ENCODE measurements at regions of chr1 and their contacts with region 1.

Region 1: DNA sequence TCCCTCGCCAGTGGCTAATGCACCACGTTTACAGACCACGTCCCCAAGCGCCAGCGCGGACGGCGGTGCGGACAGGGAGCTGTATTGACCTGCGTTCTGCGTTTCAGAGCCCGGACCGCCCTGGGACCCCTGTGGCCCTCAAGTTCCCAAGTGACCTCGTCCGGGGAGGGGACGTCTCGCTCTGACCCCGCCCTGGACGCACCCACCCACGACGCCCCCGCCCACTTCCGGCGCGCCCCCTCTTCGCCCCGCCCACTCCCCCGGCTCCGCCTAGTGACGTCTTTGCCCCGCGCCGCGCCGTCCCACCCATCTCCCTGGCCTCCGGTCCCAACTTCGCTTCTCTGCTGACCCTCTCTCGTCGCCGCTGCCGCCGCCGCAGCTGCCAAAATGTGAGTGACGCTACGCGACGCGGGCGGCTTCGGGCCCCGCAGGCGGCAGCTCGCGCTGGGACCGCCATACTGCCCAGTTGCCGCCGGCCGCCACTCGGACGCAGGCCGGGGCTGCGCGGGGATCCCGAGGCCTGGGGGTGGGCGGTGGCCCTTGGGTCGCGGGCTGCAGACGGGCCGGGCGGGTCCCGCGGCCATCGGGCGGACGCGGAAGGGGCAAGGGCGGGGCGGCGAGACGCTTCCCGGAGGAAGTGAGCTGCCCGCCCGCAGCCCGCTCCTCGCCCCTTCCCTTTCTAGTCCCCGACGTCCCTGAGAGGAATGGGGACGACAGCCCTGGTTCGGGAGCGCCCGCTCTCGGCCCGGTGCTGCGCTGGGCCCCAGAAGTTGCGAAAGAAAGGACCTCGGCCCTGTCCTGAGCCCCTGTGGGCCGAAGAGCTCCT is at the start of gene VAMP3:
- DNase-seq: peak; percentile 58 to 92 (median 77)
- ATAC-seq: peak; percentile 98
- H3K4me3 ChIP-seq: peak within 1 kb of the TSS; percentile 83
- H3K4me3 Mint-ChIP-seq: peak within 1 kb of the TSS; percentile 82 to 93 (median 89)
- H3K27ac ChIP-seq: peak within 1 kb of the TSS; percentile 90
- H3K27ac Mint-ChIP-seq: peak within 1 kb of the TSS; percentile 67 to 94 (median 86)
- H3K4me1 ChIP-seq: peaks cover 9 to 13% of the 10 kb centered on the region in 2 donors
- H3K4me1 Mint-ChIP-seq: peaks cover 22 to 52% (median 41%) of the 10 kb centered on the region in 7 donors
- H3K27me3 ChIP-seq: no peaks in the 10 kb centered on the region
- H3K27me3 Mint-ChIP-seq: peaks cover 5 to 33% (median 6%) of the 10 kb centered on the region in 5 donors
- total RNA-seq, gene VAMP3: 38.7 to 87.1 (median 60.9) TPM

Region 2: GRCh38 chr1:6127587-6128163 is 1643.5 kb before region 1 on chr1:
- CTCF ChIA-PET with region 1: no interaction called
- POLR2A ChIA-PET with region 1: no interaction called
- intact Hi-C with region 1: loop called in 1 of 2 experiments (anchors 5 kb)
- DNase-seq: peak; percentile 42 to 76 (median 67)
- ATAC-seq: peak; percentile 96
- H3K4me3 ChIP-seq: no peak overlapping the region
- H3K4me3 Mint-ChIP-seq: peak overlapping the region in 4 of 10 donors; percentile 25 to 73 (median 30)
- H3K27ac ChIP-seq: no peak overlapping the region
- H3K27ac Mint-ChIP-seq: no peak overlapping the region
- H3K4me1 ChIP-seq: peaks cover 0 to 3% of the 10 kb centered on the region in 2 donors
- H3K4me1 Mint-ChIP-seq: peaks cover 0 to 8% (median 0%) of the 10 kb centered on the region in 7 donors
- H3K27me3 ChIP-seq: no peaks in the 10 kb centered on the region
- H3K27me3 Mint-ChIP-seq: peaks cover 0 to 6% (median 0%) of the 10 kb centered on the region in 5 donors

Region 3: GRCh38 chr1:6701437-6702153 is 1069.6 kb before region 1 on chr1 and contains the start of gene DNAJC11:
- CTCF ChIA-PET with region 1: no interaction called
- POLR2A ChIA-PET with region 1: no interaction called
- intact Hi-C with region 1: loop called in 1 of 2 experiments (anchors 1 kb)
- DNase-seq: peak; percentile 84 to 99 (median 93)
- ATAC-seq: peak; percentile 99
- H3K4me3 ChIP-seq: peak within 1 kb of the TSS; percentile 90
- H3K4me3 Mint-ChIP-seq: peak within 1 kb of the TSS; percentile 87 to 96 (median 93)
- H3K27ac ChIP-seq: peak within 1 kb of the TSS; percentile 92
- H3K27ac Mint-ChIP-seq: peak within 1 kb of the TSS; percentile 77 to 95 (median 92)
- H3K4me1 ChIP-seq: peaks cover 8 to 9% of the 10 kb centered on the region in 2 donors
- H3K4me1 Mint-ChIP-seq: peaks cover 7 to 40% (median 32%) of the 10 kb centered on the region in 7 donors
- H3K27me3 ChIP-seq: no peaks in the 10 kb centered on the region
- H3K27me3 Mint-ChIP-seq: no peaks in the 10 kb centered on the region
- total RNA-seq, gene DNAJC11: 37.2 to 49.7 (median 44.0) TPM

Region 4: DNA sequence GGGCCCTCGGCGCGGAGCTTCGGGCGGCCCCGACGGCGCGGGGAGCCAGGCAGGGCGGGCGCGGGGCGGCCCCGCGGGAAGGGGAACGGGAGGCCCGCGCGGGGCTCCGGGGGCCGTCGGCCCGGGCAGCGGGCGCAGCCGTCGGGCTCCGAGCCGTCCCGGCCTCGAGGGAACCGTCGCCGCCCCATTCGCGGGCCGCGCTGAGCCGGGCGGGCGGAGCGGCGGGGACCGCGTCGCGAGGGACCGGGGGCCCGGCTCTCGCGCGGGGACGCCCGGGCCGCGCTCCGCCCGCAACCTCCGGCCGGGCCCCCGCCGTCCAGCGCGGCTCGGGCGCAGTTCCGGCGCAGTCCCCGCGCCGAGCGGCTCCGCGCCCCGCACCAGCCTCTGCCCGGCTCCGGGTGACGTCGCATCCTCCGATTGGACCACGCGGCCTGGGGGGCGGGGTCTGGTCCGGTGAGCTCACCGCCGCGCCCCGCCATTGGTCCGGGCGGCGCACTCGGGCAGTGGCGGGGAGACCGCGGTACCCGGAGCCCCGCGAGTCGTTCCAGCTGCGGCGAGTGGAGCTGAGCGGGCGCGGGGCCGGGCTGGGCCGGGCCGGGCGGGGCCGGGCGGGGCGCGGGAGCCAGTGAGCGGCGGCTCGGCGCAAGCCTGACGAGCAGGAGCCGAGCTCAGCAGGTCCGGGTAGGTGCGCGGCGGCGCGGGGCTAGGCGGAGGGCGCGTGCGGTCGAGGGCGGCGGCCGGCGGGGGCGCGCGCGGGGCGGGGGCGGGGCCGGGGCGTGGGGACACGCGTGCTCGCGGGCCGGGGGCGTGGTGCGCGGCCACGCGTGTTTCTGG is 66.8 kb before region 1 on chr1:
- CTCF ChIA-PET with region 1: interaction called, 4 read pairs
- POLR2A ChIA-PET with region 1: no interaction called
- intact Hi-C with region 1: loop called (anchors 1 kb)
- DNase-seq: peak; percentile 76 to 96 (median 88)
- ATAC-seq: peak; percentile 98
- H3K4me3 ChIP-seq: no peak overlapping the region
- H3K4me3 Mint-ChIP-seq: peak overlapping the region in 6 of 10 donors; percentile 39 to 87 (median 78)
- H3K27ac ChIP-seq: no peak overlapping the region
- H3K27ac Mint-ChIP-seq: peak overlapping the region in 1 of 9 donors; percentile 85
- H3K4me1 ChIP-seq: peaks cover under 1 to 8% of the 10 kb centered on the region in 2 donors
- H3K4me1 Mint-ChIP-seq: peaks cover 4 to 26% (median 11%) of the 10 kb centered on the region in 7 donors
- H3K27me3 ChIP-seq: peaks cover 0 to 23% of the 10 kb centered on the region in 2 donors
- H3K27me3 Mint-ChIP-seq: peaks cover 41 to 74% (median 44%) of the 10 kb centered on the region in 5 donors

Region 5: GRCh38 chr1:7752512-7753417 is 18.4 kb before region 1 on chr1:
- CTCF ChIA-PET with region 1: interaction called, 10 read pairs
- POLR2A ChIA-PET with region 1: no interaction called
- intact Hi-C with region 1: no loop called
- DNase-seq: peak in 8 of 9 donors; percentile 24 to 51 (median 42)
- ATAC-seq: peak; percentile 65
- H3K4me3 ChIP-seq: no peak overlapping the region
- H3K4me3 Mint-ChIP-seq: peak overlapping the region in 9 of 10 donors; percentile 12 to 68 (median 55)
- H3K27ac ChIP-seq: no peak overlapping the region
- H3K27ac Mint-ChIP-seq: no peak overlapping the region
- H3K4me1 ChIP-seq: peaks cover 0 to 7% of the 10 kb centered on the region in 2 donors
- H3K4me1 Mint-ChIP-seq: peaks cover 11 to 21% (median 19%) of the 10 kb centered on the region in 7 donors
- H3K27me3 ChIP-seq: no peaks in the 10 kb centered on the region
- H3K27me3 Mint-ChIP-seq: peaks cover 5 to 23% (median 15%) of the 10 kb centered on the region in 5 donors

Region 6: GRCh38 chr1:7783826-7784491 is 12.7 kb after region 1 on chr1 and contains the start of gene PER3:
- CTCF ChIA-PET with region 1: no interaction called
- POLR2A ChIA-PET with region 1: interaction called, 14 read pairs
- intact Hi-C with region 1: loop called (anchors 1 kb)
- DNase-seq: peak; percentile 84 to 97 (median 94)
- ATAC-seq: peak; percentile 93
- H3K4me3 ChIP-seq: peak within 1 kb of the TSS; percentile 58
- H3K4me3 Mint-ChIP-seq: peak within 1 kb of the TSS; percentile 67 to 85 (median 76)
- H3K27ac ChIP-seq: peak within 1 kb of the TSS; percentile 99
- H3K27ac Mint-ChIP-seq: peak within 1 kb of the TSS in 8 of 9 donors; percentile 63 to 91 (median 82)
- H3K4me1 ChIP-seq: peaks cover 8 to 17% of the 10 kb centered on the region in 2 donors
- H3K4me1 Mint-ChIP-seq: peaks cover 18 to 39% (median 28%) of the 10 kb centered on the region in 7 donors
- H3K27me3 ChIP-seq: no peaks in the 10 kb centered on the region
- H3K27me3 Mint-ChIP-seq: peaks cover 0 to 16% (median 0%) of the 10 kb centered on the region in 5 donors
- total RNA-seq, gene PER3: 2.2 to 10.4 (median 5.1) TPM

Region 7: GRCh38 chr1:7885513-7886404 is 114.5 kb after region 1 on chr1:
- CTCF ChIA-PET with region 1: no interaction called
- POLR2A ChIA-PET with region 1: no interaction called
- intact Hi-C with region 1: no loop called
- DNase-seq: peak in 1 of 9 donors; percentile 28
- ATAC-seq: no peak
- H3K4me3 ChIP-seq: no peak overlapping the region
- H3K4me3 Mint-ChIP-seq: no peak overlapping the region
- H3K27ac ChIP-seq: no peak overlapping the region
- H3K27ac Mint-ChIP-seq: no peak overlapping the region
- H3K4me1 ChIP-seq: no peaks in the 10 kb centered on the region
- H3K4me1 Mint-ChIP-seq: peaks cover 0 to 4% (median 0%) of the 10 kb centered on the region in 7 donors
- H3K27me3 ChIP-seq: peaks cover 3 to 10% of the 10 kb centered on the region in 2 donors
- H3K27me3 Mint-ChIP-seq: peaks cover 11 to 42% (median 25%) of the 10 kb centered on the region in 5 donors

Region 8: DNA sequence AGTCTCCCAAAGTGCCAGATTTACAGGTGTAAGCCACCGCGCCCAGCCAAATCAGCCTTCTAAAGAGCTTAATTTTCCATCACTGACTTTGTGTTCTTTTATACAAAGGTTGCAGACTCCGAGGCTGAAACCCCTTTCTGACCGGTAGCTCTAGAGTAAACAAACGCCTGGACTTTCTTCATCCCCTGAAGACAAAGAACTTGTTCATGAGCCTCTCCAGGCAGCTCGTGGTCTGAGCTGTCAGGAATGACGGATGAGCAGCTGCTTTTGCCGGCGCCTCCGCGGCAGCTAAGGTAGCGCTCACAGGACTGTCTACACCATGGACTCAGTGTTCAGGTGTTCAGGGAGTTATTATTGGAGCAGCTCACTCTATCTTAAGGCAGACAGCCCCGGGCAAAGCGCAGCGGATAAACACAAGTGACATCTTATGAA is 383.4 kb after region 1 on chr1:
- CTCF ChIA-PET with region 1: no interaction called
- POLR2A ChIA-PET with region 1: no interaction called
- intact Hi-C with region 1: no loop called
- DNase-seq: no peak
- ATAC-seq: no peak
- H3K4me3 ChIP-seq: no peak overlapping the region
- H3K4me3 Mint-ChIP-seq: peak overlapping the region in 6 of 10 donors; percentile 9 to 80 (median 34)
- H3K27ac ChIP-seq: no peak overlapping the region
- H3K27ac Mint-ChIP-seq: peak overlapping the region in 5 of 9 donors; percentile 25 to 99 (median 63)
- H3K4me1 ChIP-seq: peaks cover 30 to 37% of the 10 kb centered on the region in 2 donors
- H3K4me1 Mint-ChIP-seq: peaks cover 36 to 55% (median 53%) of the 10 kb centered on the region in 7 donors
- H3K27me3 ChIP-seq: no peaks in the 10 kb centered on the region
- H3K27me3 Mint-ChIP-seq: peaks cover 0 to 36% (median 13%) of the 10 kb centered on the region in 5 donors

Region 9: GRCh38 chr1:8817406-8818324 is 1046.5 kb after region 1 on chr1 and contains the start of gene RERE:
- CTCF ChIA-PET with region 1: no interaction called
- POLR2A ChIA-PET with region 1: no interaction called
- intact Hi-C with region 1: loop called in 1 of 2 experiments (anchors 10 kb)
- DNase-seq: peak; percentile 92 to 100 (median 99)
- ATAC-seq: peak; percentile 99
- H3K4me3 ChIP-seq: peak within 1 kb of the TSS; percentile 96
- H3K4me3 Mint-ChIP-seq: peak within 1 kb of the TSS; percentile 84 to 99 (median 92)
- H3K27ac ChIP-seq: peak within 1 kb of the TSS; percentile 96
- H3K27ac Mint-ChIP-seq: peak within 1 kb of the TSS; percentile 83 to 99 (median 95)
- H3K4me1 ChIP-seq: peaks cover 10 to 15% of the 10 kb centered on the region in 2 donors
- H3K4me1 Mint-ChIP-seq: peaks cover 26 to 46% (median 41%) of the 10 kb centered on the region in 7 donors
- H3K27me3 ChIP-seq: no peaks in the 10 kb centered on the region
- H3K27me3 Mint-ChIP-seq: peaks cover 0 to 23% (median 0%) of the 10 kb centered on the region in 5 donors
- total RNA-seq, gene RERE: 75.6 to 114 (median 107) TPM

Measured in naive thymus-derived CD4-positive, alpha-beta T cell (primary cell).